ENCODE measurements at regions of chr21 and their contacts with region 1.

Region 1: GRCh38 chr21:15483138-15483780 is 246.5 kb upstream of the USP25 start:
- DNase-seq: peak; percentile 85 to 86
- H3K4me3 ChIP-seq: no peak overlapping the region
- H3K27ac ChIP-seq: no peak overlapping the region
- H3K4me1 ChIP-seq: no peaks in the 10 kb centered on the region
- H3K27me3 ChIP-seq: no peaks in the 10 kb centered on the region
- CTCF ChIP-seq: peak; percentile 82 to 88

Region 2: DNA sequence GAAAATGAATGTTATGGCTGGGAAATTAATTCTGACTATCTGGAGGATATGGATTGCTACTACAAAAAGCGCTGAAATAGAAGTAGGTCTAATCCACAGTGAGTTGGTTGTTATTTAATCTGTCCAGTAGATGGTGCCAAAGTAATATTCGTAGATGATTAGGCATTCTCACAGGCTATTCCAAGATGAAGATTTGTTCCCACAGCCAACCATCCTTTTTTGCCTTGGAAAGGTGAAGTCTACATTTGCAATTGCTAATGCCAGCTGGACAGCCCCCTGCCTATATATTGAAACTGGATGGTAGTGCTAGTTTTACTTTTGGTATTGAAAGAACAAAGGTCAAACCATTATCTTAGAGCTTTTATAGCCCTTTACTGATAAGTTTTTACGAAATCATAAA is 1223.5 kb before region 1 on chr21:
- intact Hi-C with region 1: no loop called
- DNase-seq: no peak
- H3K4me3 ChIP-seq: no peak overlapping the region
- H3K27ac ChIP-seq: no peak overlapping the region
- H3K4me1 ChIP-seq: no peaks in the 10 kb centered on the region
- H3K27me3 ChIP-seq: peaks cover 0 to 2% of the 10 kb centered on the region in 2 donors
- CTCF ChIP-seq: peak; percentile 50 to 53

Region 3: GRCh38 chr21:14864211-14865021 is 618.8 kb before region 1 on chr21:
- intact Hi-C with region 1: loop called (anchors 10 kb)
- DNase-seq: peak in 1 of 2 donors; percentile 54
- H3K4me3 ChIP-seq: no peak overlapping the region
- H3K27ac ChIP-seq: no peak overlapping the region
- H3K4me1 ChIP-seq: no peaks in the 10 kb centered on the region
- H3K27me3 ChIP-seq: no peaks in the 10 kb centered on the region
- CTCF ChIP-seq: peak in 1 of 2 experiments; percentile 30

Region 4: GRCh38 chr21:15051644-15052458 is 431.4 kb before region 1 on chr21:
- intact Hi-C with region 1: loop called (anchors 10 kb)
- DNase-seq: no peak
- H3K4me3 ChIP-seq: no peak overlapping the region
- H3K27ac ChIP-seq: no peak overlapping the region
- H3K4me1 ChIP-seq: peaks cover 0 to 78% (median 8%) of the 10 kb centered on the region in 4 donors
- H3K27me3 ChIP-seq: no peaks in the 10 kb centered on the region
- CTCF ChIP-seq: no peak

Region 5: DNA sequence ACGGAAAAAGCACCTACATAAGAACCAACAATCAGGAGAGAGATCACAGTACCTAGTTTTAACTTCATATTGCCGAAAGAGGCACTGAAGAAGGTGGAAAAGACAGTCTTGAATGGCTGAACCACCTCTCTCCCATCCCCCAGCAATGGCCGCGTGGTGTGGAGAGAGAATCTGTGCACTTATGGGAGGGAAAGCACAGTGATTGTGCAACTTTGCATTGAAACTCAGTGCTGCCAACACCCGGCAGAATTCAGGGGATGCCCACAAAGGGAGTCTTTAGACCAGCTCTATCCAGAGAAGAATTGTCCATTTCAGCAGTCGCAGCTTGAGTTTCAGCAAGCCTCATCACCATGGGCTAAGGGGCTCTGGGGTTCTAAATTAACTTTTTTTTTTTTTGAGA is 60.2 kb after region 1 on chr21:
- intact Hi-C with region 1: no loop called
- DNase-seq: no peak
- H3K4me3 ChIP-seq: no peak overlapping the region
- H3K27ac ChIP-seq: no peak overlapping the region
- H3K4me1 ChIP-seq: no peaks in the 10 kb centered on the region
- H3K27me3 ChIP-seq: no peaks in the 10 kb centered on the region
- CTCF ChIP-seq: no peak

Region 6: DNA sequence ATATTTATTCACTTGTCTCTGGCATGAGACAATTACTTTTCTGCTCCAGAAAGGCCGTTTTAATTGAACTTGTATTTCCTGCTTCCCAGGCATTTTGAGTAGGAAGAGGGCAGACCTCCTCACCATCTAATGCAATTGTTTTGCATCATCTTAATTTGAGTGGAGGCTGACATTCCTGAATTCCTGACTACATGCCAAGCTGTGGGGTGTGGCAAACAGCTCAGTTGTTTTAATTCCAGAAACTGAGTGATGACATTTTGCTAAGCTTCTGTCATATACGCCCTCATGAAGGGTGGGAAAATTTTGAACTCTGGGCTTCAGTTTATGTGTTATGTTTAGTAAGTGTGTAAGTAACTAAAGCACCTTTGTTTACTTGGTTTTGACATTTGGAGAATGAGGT is 121.2 kb after region 1 on chr21:
- intact Hi-C with region 1: no loop called
- DNase-seq: no peak
- H3K4me3 ChIP-seq: no peak overlapping the region
- H3K27ac ChIP-seq: no peak overlapping the region
- H3K4me1 ChIP-seq: no peaks in the 10 kb centered on the region
- H3K27me3 ChIP-seq: no peaks in the 10 kb centered on the region
- CTCF ChIP-seq: no peak

Measured in tibial artery (tissue), 4 donors.